Activated naive CD4-positive, alpha-beta T cell treated with anti-CD3 and anti-CD28 coated beads, Interleukin-2, amount 10 ng/mL, durations not matched to agents 7 days and 5 days (primary cell): ENCODE measurements at regions of chr1 and their contacts with region 1.

Region 1: GRCh38 chr1:151340870-151341754 is 5.9 kb downstream of the RFX5 start:
- DNase-seq: peak; percentile 62
- H3K4me3 Mint-ChIP-seq: no peak overlapping the region
- H3K27ac Mint-ChIP-seq: no peak overlapping the region
- H3K4me1 Mint-ChIP-seq: peaks cover 21% of the 10 kb centered on the region
- H3K27me3 Mint-ChIP-seq: no peaks in the 10 kb centered on the region

Region 2: GRCh38 chr1:151196292-151196800 is 144.8 kb before region 1 on chr1:
- CTCF ChIA-PET with region 1: interaction called, 17 read pairs
- DNase-seq: peak; percentile 77
- H3K4me3 Mint-ChIP-seq: peak overlapping the region; percentile 35
- H3K27ac Mint-ChIP-seq: peak overlapping the region; percentile 67
- H3K4me1 Mint-ChIP-seq: peaks cover 34% of the 10 kb centered on the region
- H3K27me3 Mint-ChIP-seq: peaks cover 46% of the 10 kb centered on the region

Region 3: GRCh38 chr1:151292207-151293030 is 48.7 kb before region 1 on chr1:
- CTCF ChIA-PET with region 1: interaction called, 114 read pairs
- DNase-seq: no peak
- H3K4me3 Mint-ChIP-seq: no peak overlapping the region
- H3K27ac Mint-ChIP-seq: peak overlapping the region; percentile 45
- H3K4me1 Mint-ChIP-seq: peaks cover 7% of the 10 kb centered on the region
- H3K27me3 Mint-ChIP-seq: no peaks in the 10 kb centered on the region

Region 4: GRCh38 chr1:151311589-151312331 is 29.4 kb before region 1 on chr1:
- CTCF ChIA-PET with region 1: interaction called, 39 read pairs
- DNase-seq: peak; percentile 44
- H3K4me3 Mint-ChIP-seq: no peak overlapping the region
- H3K27ac Mint-ChIP-seq: peak overlapping the region; percentile 60
- H3K4me1 Mint-ChIP-seq: peaks cover 19% of the 10 kb centered on the region
- H3K27me3 Mint-ChIP-seq: no peaks in the 10 kb centered on the region

Region 5: DNA sequence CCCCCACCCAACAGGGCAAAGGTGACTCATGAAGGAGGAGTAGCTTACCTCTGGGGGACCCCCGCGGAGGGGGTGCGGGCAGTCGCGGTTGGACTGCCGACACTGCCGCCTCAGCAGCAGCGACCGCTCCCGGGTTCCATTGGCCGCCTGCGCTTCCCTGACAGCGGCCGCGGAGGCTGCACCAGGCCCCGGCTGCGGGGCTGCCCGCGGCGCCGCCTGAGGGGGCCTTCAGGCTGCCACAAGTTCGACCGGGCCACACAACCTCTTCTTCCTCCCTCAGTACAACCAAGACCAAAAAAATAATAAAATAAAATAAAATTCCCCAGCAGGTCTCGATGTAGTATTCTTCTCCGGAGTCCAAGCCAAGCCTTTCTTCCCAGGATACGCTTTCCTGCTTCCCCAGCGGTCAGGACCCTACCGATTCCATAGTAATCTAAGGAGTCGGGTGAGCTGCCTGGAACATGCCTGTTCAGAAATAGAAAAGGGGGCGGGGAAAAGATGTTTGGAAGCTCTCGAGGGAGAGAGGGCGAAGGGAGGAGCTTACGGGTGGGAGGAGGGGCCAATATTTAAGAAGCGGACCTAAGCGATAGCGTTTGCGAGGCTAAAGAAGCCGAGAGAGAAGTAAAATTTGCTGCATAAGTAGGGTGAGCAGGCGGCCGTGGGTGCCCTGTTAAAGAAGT is 13.7 kb before region 1 on chr1 and contains the start of gene PI4KB:
- CTCF ChIA-PET with region 1: interaction called, 24 read pairs
- DNase-seq: peak; percentile 95
- H3K4me3 Mint-ChIP-seq: peak within 1 kb of the TSS; percentile 98
- H3K27ac Mint-ChIP-seq: peak within 1 kb of the TSS; percentile 94
- H3K4me1 Mint-ChIP-seq: peaks cover 39% of the 10 kb centered on the region
- H3K27me3 Mint-ChIP-seq: peaks cover 3% of the 10 kb centered on the region

Region 6: GRCh38 chr1:151465026-151465425 is 123.9 kb after region 1 on chr1:
- CTCF ChIA-PET with region 1: no interaction called
- DNase-seq: no peak
- H3K4me3 Mint-ChIP-seq: no peak overlapping the region
- H3K27ac Mint-ChIP-seq: no peak overlapping the region
- H3K4me1 Mint-ChIP-seq: peaks cover 8% of the 10 kb centered on the region
- H3K27me3 Mint-ChIP-seq: peaks cover 47% of the 10 kb centered on the region

Region 7: DNA sequence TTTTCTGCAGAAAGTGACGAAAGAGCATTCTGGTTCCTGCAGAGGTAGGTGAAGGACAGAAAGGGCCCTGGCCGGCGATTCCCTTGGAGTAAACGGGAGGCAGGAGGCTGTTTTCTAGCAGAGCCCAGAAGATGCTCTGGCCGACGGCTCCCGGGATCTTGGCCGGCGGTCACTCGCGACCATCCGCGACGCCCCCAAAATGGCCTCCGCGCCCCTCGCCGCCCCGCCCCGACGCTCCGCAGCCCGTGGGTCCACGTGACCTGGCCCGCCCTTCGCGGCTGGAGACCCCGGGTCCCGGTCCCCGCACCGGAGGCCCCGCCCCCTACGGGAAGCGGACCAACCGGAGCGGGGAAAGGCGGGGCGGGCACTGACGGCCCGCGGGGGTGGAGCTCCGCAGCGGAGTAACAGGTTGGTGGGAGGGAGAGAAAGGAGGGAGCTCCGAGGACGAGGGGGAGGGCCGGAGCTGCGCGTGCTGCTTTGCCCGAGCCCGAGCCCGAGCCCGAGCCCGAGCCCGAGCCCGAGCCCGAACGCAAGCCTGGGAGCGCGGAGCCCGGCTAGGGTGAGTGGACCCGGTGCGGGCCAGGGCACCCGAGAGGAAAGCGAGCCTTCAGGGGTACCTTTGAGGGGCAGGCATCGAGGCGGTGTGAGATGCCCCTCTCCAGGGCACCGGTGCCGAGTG is 170.0 kb after region 1 on chr1 and contains the start of gene CGN:
- CTCF ChIA-PET with region 1: no interaction called
- DNase-seq: peak; percentile 90
- H3K4me3 Mint-ChIP-seq: peak within 1 kb of the TSS; percentile 79
- H3K27ac Mint-ChIP-seq: no peak within 1 kb of the TSS
- H3K4me1 Mint-ChIP-seq: peaks cover 29% of the 10 kb centered on the region
- H3K27me3 Mint-ChIP-seq: peaks cover 70% of the 10 kb centered on the region

Region 8: GRCh38 chr1:151526735-151527525 is 185.8 kb after region 1 on chr1:
- CTCF ChIA-PET with region 1: no interaction called
- DNase-seq: no peak
- H3K4me3 Mint-ChIP-seq: no peak overlapping the region
- H3K27ac Mint-ChIP-seq: no peak overlapping the region
- H3K4me1 Mint-ChIP-seq: no peaks in the 10 kb centered on the region
- H3K27me3 Mint-ChIP-seq: no peaks in the 10 kb centered on the region